A673 (cell line): ENCODE measurements at regions of chr11 and their contacts with region 1.

Region 1: DNA sequence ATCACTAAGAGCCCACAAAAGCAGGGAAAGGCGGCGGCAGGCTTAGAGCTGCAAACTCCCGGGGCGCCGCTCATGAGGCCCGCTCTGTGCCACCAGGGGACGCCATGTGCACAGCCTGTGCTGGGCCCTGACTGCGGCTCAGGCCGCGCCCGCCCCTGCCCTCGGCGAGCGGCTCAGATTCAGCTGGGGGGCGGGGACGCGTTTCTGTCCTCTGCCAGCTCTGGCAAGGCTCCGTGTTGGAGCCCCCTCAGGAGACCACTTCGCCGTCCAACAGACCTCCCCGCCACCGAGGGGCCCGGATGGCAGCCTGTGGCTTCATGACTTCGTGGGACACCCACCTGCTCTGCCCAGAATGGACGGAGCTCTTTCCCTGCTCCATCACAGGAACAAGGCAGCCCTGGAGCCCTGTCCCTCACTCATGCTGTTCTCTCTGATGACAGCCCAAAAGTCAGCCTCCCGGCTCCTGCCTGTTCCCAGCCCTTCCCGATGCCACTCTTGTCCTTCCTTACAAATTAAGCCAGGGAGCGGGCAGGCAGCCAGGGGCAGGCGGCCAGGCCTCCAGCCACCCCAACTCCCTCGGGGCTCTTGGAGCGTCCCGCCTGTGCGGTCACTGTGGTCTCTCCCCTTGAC is 69.1 kb downstream of the NAT10 start:
- DNase-seq: peak; percentile 95
- H3K4me3 ChIP-seq: peak overlapping the region; percentile 37
- H3K27ac ChIP-seq: no peak overlapping the region
- H3K4me1 ChIP-seq: peaks cover 20% of the 10 kb centered on the region
- H3K27me3 ChIP-seq: no peaks in the 10 kb centered on the region
- CTCF ChIP-seq: peak; percentile 99

Region 2: DNA sequence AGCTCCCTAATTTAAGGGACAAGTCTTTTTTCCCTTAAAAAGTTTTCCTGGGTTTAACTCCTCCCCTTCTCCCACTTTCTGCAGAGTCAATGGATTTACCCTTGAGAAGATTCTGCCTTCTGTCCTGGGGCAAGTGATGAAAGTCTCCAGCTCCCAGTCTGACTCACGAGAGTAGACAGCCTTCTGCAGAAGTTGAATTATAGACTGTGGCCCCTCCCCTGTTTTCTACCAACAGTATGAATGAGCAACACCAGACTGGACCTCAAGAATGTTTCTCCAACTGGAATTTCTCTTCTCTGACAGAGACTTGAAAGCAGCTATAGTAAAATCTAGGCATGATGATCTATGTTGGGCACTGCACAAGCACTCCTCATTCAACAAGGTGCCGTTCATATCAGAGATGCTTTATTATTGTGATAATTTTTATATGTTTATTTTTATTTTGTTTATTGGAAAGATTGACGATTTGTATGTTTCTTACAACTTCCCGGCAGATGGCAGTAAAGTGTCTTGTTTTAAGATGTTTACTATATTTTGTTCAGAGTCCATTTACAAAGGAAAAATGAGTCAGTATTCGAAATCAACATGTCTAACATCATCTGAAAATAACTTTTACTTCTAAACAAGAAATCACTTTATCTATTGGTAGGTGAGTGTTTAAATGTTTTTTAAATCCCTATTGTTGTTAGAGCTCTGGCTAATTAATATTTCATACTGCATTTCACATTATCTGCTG is 339.2 kb before region 1 on chr11:
- CTCF ChIA-PET with region 1: interaction called, 3 read pairs
- POLR2A ChIA-PET with region 1: no interaction called
- intact Hi-C with region 1: loop called (anchors 5 kb)
- DNase-seq: peak; percentile 89
- H3K4me3 ChIP-seq: peak overlapping the region; percentile 24
- H3K27ac ChIP-seq: peak overlapping the region; percentile 57
- H3K4me1 ChIP-seq: peaks cover 39% of the 10 kb centered on the region
- H3K27me3 ChIP-seq: no peaks in the 10 kb centered on the region
- CTCF ChIP-seq: peak; percentile 86

Region 3: GRCh38 chr11:34185926-34186841 is 11.7 kb after region 1 on chr11:
- CTCF ChIA-PET with region 1: interaction called, 15 read pairs
- POLR2A ChIA-PET with region 1: no interaction called
- intact Hi-C with region 1: no loop called
- DNase-seq: peak; percentile 63
- H3K4me3 ChIP-seq: no peak overlapping the region
- H3K27ac ChIP-seq: peak overlapping the region; percentile 44
- H3K4me1 ChIP-seq: peaks cover 25% of the 10 kb centered on the region
- H3K27me3 ChIP-seq: no peaks in the 10 kb centered on the region
- CTCF ChIP-seq: no peak

Region 4: DNA sequence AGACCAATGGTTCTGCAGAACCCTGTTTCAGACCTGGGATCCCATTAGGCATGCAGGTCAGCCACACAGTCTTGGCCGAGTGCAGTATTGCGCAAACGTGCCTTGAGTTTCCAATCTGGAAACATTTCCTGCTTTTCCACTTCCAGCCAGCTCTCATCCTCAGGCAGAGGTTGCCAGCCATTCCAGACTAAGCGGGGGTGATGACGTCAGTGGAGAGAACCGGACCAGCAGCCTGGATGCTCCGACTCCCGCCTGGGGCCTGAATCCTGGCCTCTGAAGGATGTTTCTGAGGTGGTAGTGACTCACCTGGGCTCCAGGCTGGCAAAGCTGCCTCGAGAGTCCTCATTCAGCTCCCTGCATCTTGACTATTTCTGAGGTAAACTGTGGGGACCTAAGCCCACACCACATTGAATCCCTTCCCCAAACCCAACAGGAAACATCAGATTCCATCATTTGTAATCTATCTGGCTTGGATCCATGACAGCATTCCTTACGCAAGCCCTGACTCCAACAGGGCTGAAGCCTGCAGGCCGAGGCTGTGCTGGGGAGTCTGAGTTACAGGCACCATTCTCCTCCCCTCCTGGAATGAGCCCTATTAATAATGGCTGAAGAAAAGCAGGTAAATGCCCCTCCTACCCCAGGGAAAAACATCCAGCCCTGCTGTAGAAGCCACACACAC is 100.3 kb after region 1 on chr11:
- CTCF ChIA-PET with region 1: interaction called, 4 read pairs
- POLR2A ChIA-PET with region 1: interaction called, 18 read pairs
- intact Hi-C with region 1: no loop called
- DNase-seq: peak; percentile 76
- H3K4me3 ChIP-seq: no peak overlapping the region
- H3K27ac ChIP-seq: no peak overlapping the region
- H3K4me1 ChIP-seq: peaks cover 14% of the 10 kb centered on the region
- H3K27me3 ChIP-seq: no peaks in the 10 kb centered on the region
- CTCF ChIP-seq: no peak

Region 5: GRCh38 chr11:34379079-34379478 is 204.6 kb after region 1 on chr11:
- CTCF ChIA-PET with region 1: no interaction called
- POLR2A ChIA-PET with region 1: no interaction called
- intact Hi-C with region 1: no loop called
- DNase-seq: no peak
- H3K4me3 ChIP-seq: no peak overlapping the region
- H3K27ac ChIP-seq: no peak overlapping the region
- H3K4me1 ChIP-seq: no peaks in the 10 kb centered on the region
- H3K27me3 ChIP-seq: no peaks in the 10 kb centered on the region
- CTCF ChIP-seq: no peak

Region 6: DNA sequence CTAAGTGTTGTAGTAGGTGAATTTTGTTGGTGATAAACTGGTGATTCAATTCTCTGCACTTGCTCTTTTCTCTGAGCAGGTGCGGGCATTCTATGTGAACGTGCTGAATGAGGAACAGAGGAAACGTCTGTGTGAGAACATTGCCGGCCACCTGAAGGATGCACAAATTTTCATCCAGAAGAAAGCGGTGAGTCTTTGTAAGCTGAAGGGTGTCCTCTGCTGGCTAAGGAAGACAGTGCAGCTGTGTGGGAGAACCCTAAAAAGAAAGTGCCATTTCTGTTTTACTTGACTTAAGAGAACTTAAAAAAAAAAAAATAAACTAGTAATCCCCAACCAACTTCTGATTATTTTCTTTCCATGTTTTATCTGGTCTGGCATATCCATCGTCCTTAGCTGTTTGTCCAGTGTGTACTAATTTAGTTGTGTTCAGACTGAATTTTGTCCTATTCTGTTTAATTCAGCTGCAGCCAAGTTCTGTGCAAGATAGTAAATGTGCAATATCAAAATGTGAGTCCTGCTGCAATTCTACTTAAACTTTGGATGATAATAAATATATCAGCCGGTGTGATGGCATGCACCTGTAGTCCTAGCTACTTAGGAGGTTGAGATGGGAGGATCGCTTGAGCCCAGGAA is 293.8 kb after region 1 on chr11:
- CTCF ChIA-PET with region 1: interaction called, 23 read pairs
- POLR2A ChIA-PET with region 1: no interaction called
- intact Hi-C with region 1: loop called (anchors 1 kb)
- DNase-seq: peak; percentile 86
- H3K4me3 ChIP-seq: no peak overlapping the region
- H3K27ac ChIP-seq: no peak overlapping the region
- H3K4me1 ChIP-seq: peaks cover 10% of the 10 kb centered on the region
- H3K27me3 ChIP-seq: no peaks in the 10 kb centered on the region
- CTCF ChIP-seq: peak; percentile 100

Region 7: GRCh38 chr11:34492806-34493414 is 318.4 kb after region 1 on chr11:
- CTCF ChIA-PET with region 1: interaction called, 13 read pairs
- POLR2A ChIA-PET with region 1: no interaction called
- intact Hi-C with region 1: loop called (anchors 2 kb)
- DNase-seq: peak; percentile 91
- H3K4me3 ChIP-seq: no peak overlapping the region
- H3K27ac ChIP-seq: no peak overlapping the region
- H3K4me1 ChIP-seq: no peaks in the 10 kb centered on the region
- H3K27me3 ChIP-seq: no peaks in the 10 kb centered on the region
- CTCF ChIP-seq: peak; percentile 99

Region 8: DNA sequence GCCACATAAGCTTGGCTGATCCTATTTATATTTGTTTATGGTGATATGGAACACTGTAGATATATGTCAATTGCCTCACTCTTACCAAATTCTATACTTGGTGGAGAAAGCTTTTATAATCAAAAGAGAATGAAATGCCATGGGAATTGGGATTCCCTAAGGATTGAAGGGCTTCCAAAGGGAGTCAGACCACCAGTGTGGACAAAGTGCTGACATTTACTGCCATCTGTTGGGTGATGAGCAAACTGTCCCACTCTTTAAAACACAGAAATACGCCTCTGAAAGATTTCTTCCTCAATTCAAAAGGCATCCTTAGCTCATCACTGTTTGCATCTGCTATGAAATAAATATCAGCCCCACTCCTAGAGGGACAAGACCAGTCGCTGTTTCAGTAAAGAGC is 1237.8 kb after region 1 on chr11:
- CTCF ChIA-PET with region 1: interaction called, 10 read pairs
- POLR2A ChIA-PET with region 1: no interaction called
- intact Hi-C with region 1: no loop called
- DNase-seq: peak; percentile 67
- H3K4me3 ChIP-seq: no peak overlapping the region
- H3K27ac ChIP-seq: no peak overlapping the region
- H3K4me1 ChIP-seq: no peaks in the 10 kb centered on the region
- H3K27me3 ChIP-seq: peaks cover 90% of the 10 kb centered on the region
- CTCF ChIP-seq: peak; percentile 81